ENCODE measurements at regions of chr6 and their contacts with region 1.

Region 1: DNA sequence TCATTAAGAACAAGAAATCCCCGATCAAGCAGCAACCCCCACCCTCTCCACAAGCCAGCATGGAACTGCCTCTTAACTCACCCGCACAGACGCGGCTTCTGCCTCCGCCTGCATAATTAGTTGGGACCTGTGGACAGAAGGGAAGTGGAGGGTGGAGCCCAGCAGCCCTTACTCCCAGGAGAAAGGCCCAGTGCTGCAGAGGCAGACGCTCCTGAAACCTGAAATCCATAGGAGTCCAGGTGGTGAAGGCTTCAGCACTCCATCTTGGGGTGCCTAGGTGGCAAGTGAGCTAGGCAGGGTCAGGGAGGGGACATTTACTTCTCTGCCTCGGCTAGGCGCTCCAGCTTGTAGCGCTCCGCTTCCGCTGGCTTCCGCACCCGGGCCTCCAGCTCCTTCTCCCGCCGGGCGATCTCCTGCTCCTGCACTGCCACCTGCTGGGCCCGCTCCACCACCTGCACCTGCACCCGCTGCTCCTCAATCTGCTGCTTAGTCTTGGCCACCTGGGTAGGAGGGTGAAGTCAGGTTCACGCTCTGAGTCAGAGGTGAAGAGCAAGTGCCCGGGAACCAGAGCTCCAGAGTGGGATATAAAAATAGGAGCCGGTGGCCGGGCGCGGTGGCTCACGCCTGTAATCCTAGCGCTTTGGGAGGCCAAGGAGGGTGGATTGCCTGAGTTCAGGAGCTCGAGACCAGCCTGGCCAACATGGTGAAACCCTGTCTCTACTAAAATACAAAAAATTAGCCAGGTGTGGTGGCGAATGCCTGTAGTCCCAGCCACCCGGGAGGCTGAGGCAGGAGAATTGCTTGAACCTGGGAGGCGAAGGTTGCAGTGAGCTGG is 10.7 kb downstream of the TUBB start:
- DNase-seq: peak; percentile 89
- H3K4me3 ChIP-seq: peak overlapping the region; percentile 18
- H3K27ac ChIP-seq: no peak overlapping the region
- H3K4me1 ChIP-seq: peaks cover 33% of the 10 kb centered on the region
- CTCF ChIP-seq: peak; percentile 86

Region 2: GRCh38 chr6:30678964-30679726 is 51.7 kb before region 1 on chr6:
- CTCF ChIA-PET with region 1: interaction called, 10 read pairs
- POLR2A ChIA-PET with region 1: interaction called, 9 read pairs
- intact Hi-C with region 1: loop called (anchors 1 kb)
- DNase-seq: peak; percentile 89
- H3K4me3 ChIP-seq: peak overlapping the region; percentile 95
- H3K27ac ChIP-seq: peak overlapping the region; percentile 78
- H3K4me1 ChIP-seq: peaks cover 30% of the 10 kb centered on the region
- CTCF ChIP-seq: peak; percentile 97